Sigmoid colon (tissue), 7 donors: ENCODE measurements at regions of chr16 and their contacts with region 1.

Region 1: DNA sequence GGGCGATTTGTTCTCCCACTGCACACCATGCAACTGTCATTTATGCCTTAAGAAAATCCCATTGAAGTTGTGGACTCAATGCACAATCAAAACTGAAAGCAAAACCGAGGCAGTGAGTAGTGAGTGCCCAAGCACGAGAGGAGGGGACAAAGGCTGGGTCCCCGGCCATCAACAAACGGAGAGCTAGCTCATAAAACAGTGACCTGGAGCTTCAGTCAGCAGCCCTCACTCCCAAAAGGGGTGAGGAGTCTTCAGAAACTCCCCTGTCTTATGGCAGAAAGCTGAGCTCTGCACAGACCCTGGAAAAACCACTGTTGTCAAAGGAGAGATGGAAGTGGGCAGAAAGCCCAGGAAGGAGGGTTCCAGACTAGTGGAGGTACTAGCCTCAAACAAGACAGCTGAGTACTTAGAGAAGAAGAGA is 96.9 kb downstream of the ADCY9 start:
- DNase-seq: no peak
- H3K4me3 ChIP-seq: peak overlapping the region; percentile 14 to 49 (median 38)
- H3K27ac ChIP-seq: peak overlapping the region; percentile 52 to 74 (median 65)
- H3K4me1 ChIP-seq: peaks cover 0 to 18% (median 12%) of the 10 kb centered on the region in 4 donors
- H3K27me3 ChIP-seq: no peaks in the 10 kb centered on the region
- CTCF ChIP-seq: no peak
- EP300 ChIP-seq: no peak
- POLR2A ChIP-seq: no peak

Region 2: DNA sequence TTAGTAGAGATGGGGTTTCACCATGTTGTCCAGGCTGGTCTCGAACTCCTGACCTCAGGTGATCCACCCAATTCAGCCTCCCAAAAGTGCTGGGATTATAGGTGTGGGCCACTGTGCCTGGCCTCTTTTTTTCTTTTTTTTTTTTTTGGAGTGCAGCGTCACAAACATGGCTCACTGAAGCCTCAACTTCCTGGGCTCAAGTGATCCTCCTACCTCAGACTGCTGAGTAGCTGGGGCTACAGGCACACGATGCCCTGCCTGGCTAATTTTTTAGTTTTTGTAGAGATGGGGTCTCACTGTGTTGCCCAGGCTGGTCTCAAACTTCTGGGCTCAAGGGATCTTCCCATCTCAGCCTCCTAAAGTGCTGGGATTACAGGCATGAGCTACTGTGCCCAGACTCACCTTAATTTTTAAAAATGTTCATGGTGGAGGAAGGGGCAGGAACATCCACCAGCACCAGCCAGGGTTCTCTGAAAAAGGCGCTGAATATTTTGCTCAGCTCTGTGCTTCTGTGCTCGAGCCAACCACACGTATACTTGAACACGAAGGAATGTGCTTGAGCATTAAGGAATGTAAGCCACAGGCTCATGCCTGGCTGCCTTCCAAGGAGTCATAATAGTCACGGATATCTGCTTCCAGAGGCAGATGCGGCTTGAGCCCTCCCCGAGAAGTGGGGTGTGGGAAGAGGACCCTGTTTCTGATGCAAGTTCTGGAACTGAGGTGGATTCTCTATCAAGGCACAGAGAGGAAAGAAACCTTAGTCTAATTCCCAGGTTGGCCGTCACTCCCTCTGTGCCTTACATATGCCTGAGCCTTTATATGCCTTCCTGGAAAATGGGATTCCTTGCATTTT is 73.4 kb before region 1 on chr16:
- intact Hi-C with region 1: no loop called
- DNase-seq: no peak
- H3K4me3 ChIP-seq: no peak overlapping the region
- H3K27ac ChIP-seq: peak overlapping the region in 3 of 4 donors; percentile 21 to 75 (median 62)
- H3K4me1 ChIP-seq: peaks cover 0 to 40% (median 34%) of the 10 kb centered on the region in 4 donors
- H3K27me3 ChIP-seq: no peaks in the 10 kb centered on the region
- CTCF ChIP-seq: no peak
- EP300 ChIP-seq: no peak
- POLR2A ChIP-seq: no peak

Region 3: DNA sequence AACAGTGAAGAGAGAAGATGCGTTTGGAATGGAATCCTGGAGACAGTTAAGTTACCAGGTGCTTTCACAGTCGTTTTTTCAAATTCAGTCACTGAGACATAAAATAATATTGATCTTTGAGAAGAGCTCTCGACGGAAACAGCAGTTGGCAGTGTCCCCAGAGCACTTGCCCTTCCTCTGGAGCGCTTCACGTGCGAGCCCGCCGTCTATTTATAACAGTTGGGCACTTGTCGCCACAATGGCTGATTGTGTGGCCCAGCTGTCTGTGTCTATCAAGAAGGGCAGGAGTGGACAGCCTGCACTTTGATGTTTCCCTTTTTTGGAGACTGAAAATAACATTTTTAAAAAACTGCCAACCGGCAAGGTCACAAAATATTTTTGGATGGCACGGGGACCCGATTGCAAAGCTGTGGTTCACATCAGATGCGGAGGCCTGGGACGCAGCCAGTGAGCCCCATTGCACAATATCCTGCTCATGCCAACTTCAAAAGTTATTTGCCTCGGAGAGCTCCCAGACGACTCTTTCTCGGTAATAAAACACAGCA is 34.0 kb after region 1 on chr16:
- intact Hi-C with region 1: loop called (anchors 5 kb)
- DNase-seq: peak; percentile 85
- H3K4me3 ChIP-seq: peak overlapping the region; percentile 2 to 23 (median 20)
- H3K27ac ChIP-seq: peak overlapping the region; percentile 56 to 83 (median 73)
- H3K4me1 ChIP-seq: peaks cover 0 to 27% (median 22%) of the 10 kb centered on the region in 4 donors
- H3K27me3 ChIP-seq: no peaks in the 10 kb centered on the region
- CTCF ChIP-seq: no peak
- EP300 ChIP-seq: peak in 1 of 4 donors; percentile 37
- POLR2A ChIP-seq: no peak